ENCODE measurements at regions of chr12 and their contacts with region 1.

Region 1: DNA sequence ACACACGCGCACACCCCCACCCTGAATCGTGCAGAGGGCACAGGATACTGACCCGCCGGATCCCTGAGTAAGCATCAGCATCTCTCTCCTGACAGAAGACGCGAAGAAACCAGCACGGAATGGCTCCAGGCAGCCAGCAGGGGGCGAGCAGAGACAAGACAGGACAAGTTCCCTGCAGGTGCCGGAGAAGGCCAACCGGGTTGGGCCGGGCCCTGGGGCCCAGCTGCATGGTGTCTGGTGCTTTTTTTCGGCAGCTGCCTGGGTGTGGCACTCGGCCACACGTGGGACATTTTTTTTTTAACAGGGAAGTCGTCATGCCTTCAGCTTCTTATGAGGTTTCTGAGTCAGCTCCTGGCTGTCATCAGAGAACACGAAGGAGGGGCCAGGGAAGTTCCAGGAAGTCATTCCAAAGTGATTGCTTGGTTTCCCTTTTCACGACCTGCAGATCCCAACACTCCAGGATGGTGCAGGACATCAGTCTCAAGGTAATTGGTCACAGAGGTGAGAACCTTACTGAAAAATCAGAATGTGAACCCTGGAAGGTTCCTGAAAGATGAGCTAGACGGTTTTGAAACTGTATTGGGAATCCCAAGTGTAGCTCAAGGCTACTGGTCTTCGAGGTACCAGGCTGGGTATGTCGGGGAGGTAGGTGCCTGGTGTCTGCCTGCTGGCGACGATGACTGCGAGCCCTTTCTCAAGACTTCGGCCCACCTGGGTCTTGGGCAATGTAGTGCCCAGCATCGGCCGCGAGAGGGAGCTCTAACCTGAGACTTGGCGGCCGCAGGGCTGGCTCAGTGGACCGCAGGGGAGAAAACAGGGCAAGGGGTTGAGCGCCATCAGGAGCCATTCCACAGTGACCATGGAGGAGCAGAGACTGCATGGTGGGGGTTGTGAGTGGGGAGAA is 190.8 kb upstream of the PRMT8 start:
- DNase-seq: peak; percentile 94
- ATAC-seq: peak; percentile 83

Region 2: DNA sequence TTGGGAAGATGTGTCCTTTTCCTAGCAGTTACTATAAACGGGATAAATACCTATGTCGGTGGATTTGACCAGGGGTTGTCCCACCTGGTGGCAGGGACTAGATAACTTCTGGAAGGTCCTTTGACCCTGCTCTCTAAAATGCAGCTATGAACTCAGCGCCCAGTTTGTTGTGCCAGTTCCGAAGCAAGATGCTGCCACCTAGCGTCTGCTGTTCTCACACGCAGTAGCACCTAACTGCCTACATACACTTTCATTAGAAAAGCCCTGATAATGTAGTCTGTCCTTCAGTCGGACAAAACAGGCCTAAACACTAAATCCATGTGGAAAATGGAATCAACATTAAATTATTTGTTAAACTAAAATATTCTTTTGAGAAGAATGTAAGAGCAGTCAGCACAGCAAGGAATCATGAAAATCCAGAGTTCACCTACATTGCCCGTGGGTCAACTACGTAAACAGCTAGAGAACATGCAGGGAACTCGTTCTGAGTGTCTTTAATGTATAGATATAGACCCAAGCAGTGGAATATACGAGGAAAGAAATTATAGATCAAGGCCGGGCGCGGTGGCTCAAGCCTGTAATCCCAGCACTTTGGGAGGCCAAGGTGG is 503.8 kb after region 1 on chr12:
- intact Hi-C with region 1: loop called (anchors 5 kb)
- DNase-seq: peak; percentile 87
- ATAC-seq: peak; percentile 86

Measured in sciatic nerve (tissue), 2 donors.